ENCODE measurements at regions of chr12 and their contacts with region 1.

Region 1: GRCh38 chr12:6644903-6645302 is 2.3 kb downstream of the ACRBP start:
- DNase-seq: peak; percentile 74
- H3K4me3 ChIP-seq: no peak overlapping the region
- H3K27ac ChIP-seq: no peak overlapping the region
- H3K4me1 ChIP-seq: no peaks in the 10 kb centered on the region
- H3K27me3 ChIP-seq: no peaks in the 10 kb centered on the region
- CTCF ChIP-seq: peak; percentile 28
- EP300 ChIP-seq: no peak
- RAD21 ChIP-seq: peak; percentile 75

Region 2: DNA sequence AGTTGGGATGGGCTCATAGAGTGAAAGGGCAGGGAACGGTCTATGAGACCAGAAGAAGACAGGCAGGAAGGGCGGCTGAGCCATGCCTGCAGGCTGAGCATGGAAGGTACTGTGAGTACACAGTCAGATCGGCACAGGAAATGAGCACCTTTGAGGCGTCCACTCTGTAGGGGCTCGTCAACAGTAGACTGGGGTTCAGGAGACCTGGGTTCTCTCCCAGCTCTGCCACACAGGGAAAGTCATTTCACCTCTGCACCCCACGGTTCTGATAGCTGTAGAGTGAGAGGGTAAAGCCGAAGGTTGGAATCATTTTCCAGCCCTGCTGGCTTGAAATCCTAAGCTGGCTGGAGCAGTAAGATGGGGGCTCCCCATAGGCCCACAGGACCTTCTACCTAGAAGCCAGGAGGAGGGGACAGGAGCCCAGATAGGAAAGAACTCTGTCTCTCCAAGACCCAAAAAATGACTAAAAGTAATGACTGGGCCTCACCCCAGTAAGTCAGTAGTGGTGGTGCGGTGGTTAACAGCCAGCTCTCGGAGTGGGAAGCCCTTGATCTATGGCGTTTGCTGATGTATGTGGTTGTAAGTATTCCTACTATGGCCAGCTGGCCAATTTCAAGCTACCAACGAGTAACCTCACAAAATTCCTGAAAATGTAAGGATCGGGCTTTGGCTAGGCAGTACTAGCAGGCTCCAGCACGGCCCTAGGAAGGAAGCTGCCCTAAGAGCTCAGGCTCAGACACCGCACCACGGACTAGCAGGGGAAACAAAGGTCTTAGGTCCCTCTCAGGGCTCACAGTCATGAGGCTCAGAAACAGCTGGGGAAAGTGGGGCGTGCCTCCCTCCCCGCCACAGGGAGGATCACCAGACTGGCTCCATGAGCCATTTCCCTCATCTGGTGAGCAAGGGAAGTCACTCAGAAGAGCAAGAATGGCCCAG is 210.4 kb before region 1 on chr12:
- CTCF ChIA-PET with region 1: no interaction called
- POLR2A ChIA-PET with region 1: no interaction called
- DNase-seq: no peak
- H3K4me3 ChIP-seq: no peak overlapping the region
- H3K27ac ChIP-seq: no peak overlapping the region
- H3K4me1 ChIP-seq: peaks cover 3 to 6% of the 10 kb centered on the region in 2 experiments; a peak in 2 of 4 replicates
- H3K27me3 ChIP-seq: no peaks in the 10 kb centered on the region
- CTCF ChIP-seq: no peak
- EP300 ChIP-seq: no peak
- RAD21 ChIP-seq: no peak

Region 3: GRCh38 chr12:6554168-6555017 is 90.5 kb before region 1 on chr12:
- CTCF ChIA-PET with region 1: interaction called, 10 read pairs
- POLR2A ChIA-PET with region 1: no interaction called
- DNase-seq: peak; percentile 89
- H3K4me3 ChIP-seq: peak overlapping the region; percentile 79 to 85
- H3K27ac ChIP-seq: peak overlapping the region; percentile 70 to 93; a peak in 3 of 4 replicates
- H3K4me1 ChIP-seq: peaks cover 36 to 40% of the 10 kb centered on the region in 2 experiments
- H3K27me3 ChIP-seq: no peaks in the 10 kb centered on the region
- CTCF ChIP-seq: peak; percentile 69
- EP300 ChIP-seq: no peak
- RAD21 ChIP-seq: peak; percentile 51

Region 4: DNA sequence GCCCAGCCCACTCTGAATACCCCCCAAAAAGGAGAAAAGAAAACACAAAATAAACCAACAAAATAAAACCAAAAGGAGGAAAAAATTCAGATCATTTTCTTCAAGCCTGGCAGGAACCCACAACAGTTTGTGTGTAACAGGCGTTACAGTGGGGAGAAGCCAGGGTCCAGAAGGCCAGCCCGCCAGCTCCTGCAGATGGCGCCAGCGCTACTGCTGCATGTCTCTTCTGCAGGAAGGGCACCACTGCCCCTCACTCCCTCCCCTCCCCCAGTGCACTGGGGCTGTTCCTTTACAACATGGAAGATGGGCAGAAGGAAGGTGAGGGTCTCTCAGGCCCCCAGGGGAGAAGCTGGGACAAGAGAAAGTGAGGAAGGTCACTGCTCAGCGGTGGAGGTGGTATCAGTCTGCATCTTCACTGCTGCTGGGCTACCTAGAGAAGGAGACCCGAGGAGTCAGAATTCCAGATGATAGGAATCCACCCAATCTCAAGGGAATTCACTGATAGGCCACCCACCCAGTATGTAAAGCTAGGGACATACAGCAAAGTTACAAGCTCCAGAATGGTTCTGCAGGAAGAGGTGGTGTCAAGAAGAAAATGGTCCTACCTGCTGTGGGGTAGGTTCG is 74.5 kb before region 1 on chr12:
- CTCF ChIA-PET with region 1: interaction called, 11 read pairs
- POLR2A ChIA-PET with region 1: no interaction called
- DNase-seq: peak; percentile 83
- H3K4me3 ChIP-seq: no peak overlapping the region
- H3K27ac ChIP-seq: peak overlapping the region in 1 of 2 experiments; percentile 27; a peak in 1 of 4 replicates
- H3K4me1 ChIP-seq: peaks cover 4 to 8% of the 10 kb centered on the region in 2 experiments; a peak in 2 of 4 replicates
- H3K27me3 ChIP-seq: no peaks in the 10 kb centered on the region
- CTCF ChIP-seq: peak; percentile 71
- EP300 ChIP-seq: no peak
- RAD21 ChIP-seq: peak; percentile 53

Region 5: DNA sequence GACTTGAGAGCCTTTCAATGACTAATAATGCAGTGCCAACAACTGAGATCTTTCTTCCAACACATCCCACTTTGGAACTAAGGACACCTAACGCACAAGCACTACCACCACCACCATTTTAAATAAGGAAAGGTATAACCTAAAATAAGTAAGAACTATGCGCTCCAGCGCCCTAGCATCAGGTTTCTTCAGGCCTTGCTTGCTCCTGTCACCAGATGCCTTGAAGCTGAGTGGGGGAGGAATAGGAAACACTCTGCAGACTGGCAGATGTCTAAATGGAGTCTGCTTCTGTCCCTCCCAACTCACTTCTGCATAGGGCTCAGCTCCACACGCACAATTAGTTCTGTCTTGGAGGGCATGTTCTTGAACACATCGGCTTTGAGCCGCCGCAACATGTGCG is 52.8 kb before region 1 on chr12:
- CTCF ChIA-PET with region 1: no interaction called
- POLR2A ChIA-PET with region 1: no interaction called
- DNase-seq: no peak
- H3K4me3 ChIP-seq: no peak overlapping the region
- H3K27ac ChIP-seq: no peak overlapping the region
- H3K4me1 ChIP-seq: no peaks in the 10 kb centered on the region
- H3K27me3 ChIP-seq: no peaks in the 10 kb centered on the region
- CTCF ChIP-seq: no peak
- EP300 ChIP-seq: no peak
- RAD21 ChIP-seq: no peak

Region 6: GRCh38 chr12:6613776-6614512 is 31.0 kb before region 1 on chr12:
- CTCF ChIA-PET with region 1: interaction called, 32 read pairs
- POLR2A ChIA-PET with region 1: interaction called, 5 read pairs
- DNase-seq: peak; percentile 88
- H3K4me3 ChIP-seq: no peak overlapping the region; a peak in 1 of 4 replicates
- H3K27ac ChIP-seq: peak overlapping the region; percentile 91 to 100
- H3K4me1 ChIP-seq: peaks cover 26 to 35% of the 10 kb centered on the region in 2 experiments
- H3K27me3 ChIP-seq: no peaks in the 10 kb centered on the region
- CTCF ChIP-seq: peak; percentile 43
- EP300 ChIP-seq: no peak
- RAD21 ChIP-seq: 0 out of 2 replicates have a peak, but pooled peaks have one; percentile 30

Region 7: GRCh38 chr12:6620137-6620884 is 24.6 kb before region 1 on chr12:
- CTCF ChIA-PET with region 1: interaction called, 32 read pairs
- POLR2A ChIA-PET with region 1: interaction called, 5 read pairs
- DNase-seq: peak; percentile 17
- H3K4me3 ChIP-seq: peak overlapping the region in 1 of 2 experiments; percentile 35; a peak in 1 of 4 replicates
- H3K27ac ChIP-seq: no peak overlapping the region
- H3K4me1 ChIP-seq: no peaks in the 10 kb centered on the region; a peak in 1 of 4 replicates
- H3K27me3 ChIP-seq: no peaks in the 10 kb centered on the region
- CTCF ChIP-seq: no peak
- EP300 ChIP-seq: no peak
- RAD21 ChIP-seq: no peak

Region 8: DNA sequence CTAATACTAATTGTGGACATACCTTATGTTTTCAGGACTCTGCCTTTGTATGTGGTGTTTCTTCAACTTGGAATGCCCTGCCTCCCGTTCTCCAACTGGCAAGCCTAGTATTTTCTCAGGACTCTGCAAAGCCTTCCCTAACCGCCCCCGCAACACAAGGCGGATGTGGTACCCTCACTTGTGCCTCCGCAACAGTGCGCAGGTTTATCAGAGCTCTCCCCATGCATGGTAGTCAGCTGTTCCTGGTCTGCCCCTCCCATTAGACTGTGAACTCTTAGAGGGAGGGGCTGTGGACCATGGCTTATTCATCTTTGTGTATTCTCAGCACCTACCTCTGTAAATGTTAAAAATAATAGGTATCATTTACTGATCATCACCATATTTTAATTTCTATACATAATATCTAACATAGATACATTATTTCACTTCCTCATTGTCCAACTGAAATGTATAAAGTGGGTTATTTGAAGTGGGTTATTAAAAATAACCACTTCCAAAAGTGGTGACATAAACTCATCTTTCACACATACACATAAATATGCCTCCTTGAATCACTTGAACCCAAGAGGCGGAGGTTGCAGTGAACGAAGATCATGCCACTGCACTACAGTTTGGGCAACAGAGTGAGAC is 18.1 kb before region 1 on chr12:
- CTCF ChIA-PET with region 1: interaction called, 21 read pairs
- POLR2A ChIA-PET with region 1: no interaction called
- DNase-seq: no peak
- H3K4me3 ChIP-seq: no peak overlapping the region
- H3K27ac ChIP-seq: no peak overlapping the region
- H3K4me1 ChIP-seq: peaks cover 0 to 14% of the 10 kb centered on the region in 2 experiments; a peak in 1 of 4 replicates
- H3K27me3 ChIP-seq: no peaks in the 10 kb centered on the region
- CTCF ChIP-seq: no peak
- EP300 ChIP-seq: no peak
- RAD21 ChIP-seq: no peak